Tibial artery (tissue), 4 donors: ENCODE measurements at regions of chr14 and their contacts with region 1.

Region 1: GRCh38 chr14:22386924-22387775 is 201.9 kb downstream of the DAD1 start:
- DNase-seq: peak in 1 of 2 donors; percentile 60
- H3K4me3 ChIP-seq: no peak overlapping the region
- H3K27ac ChIP-seq: peak overlapping the region in 1 of 2 donors; percentile 13
- H3K4me1 ChIP-seq: peaks cover 0 to 11% (median 5%) of the 10 kb centered on the region in 4 donors
- H3K27me3 ChIP-seq: peaks cover 0 to 6% of the 10 kb centered on the region in 2 donors
- CTCF ChIP-seq: peak; percentile 75 to 82

Region 2: GRCh38 chr14:22319526-22320361 is 67.4 kb before region 1 on chr14:
- intact Hi-C with region 1: loop called (anchors 5 kb)
- DNase-seq: peak; percentile 68 to 70
- H3K4me3 ChIP-seq: no peak overlapping the region
- H3K27ac ChIP-seq: no peak overlapping the region
- H3K4me1 ChIP-seq: no peaks in the 10 kb centered on the region
- H3K27me3 ChIP-seq: no peaks in the 10 kb centered on the region
- CTCF ChIP-seq: peak; percentile 64 to 67

Region 3: DNA sequence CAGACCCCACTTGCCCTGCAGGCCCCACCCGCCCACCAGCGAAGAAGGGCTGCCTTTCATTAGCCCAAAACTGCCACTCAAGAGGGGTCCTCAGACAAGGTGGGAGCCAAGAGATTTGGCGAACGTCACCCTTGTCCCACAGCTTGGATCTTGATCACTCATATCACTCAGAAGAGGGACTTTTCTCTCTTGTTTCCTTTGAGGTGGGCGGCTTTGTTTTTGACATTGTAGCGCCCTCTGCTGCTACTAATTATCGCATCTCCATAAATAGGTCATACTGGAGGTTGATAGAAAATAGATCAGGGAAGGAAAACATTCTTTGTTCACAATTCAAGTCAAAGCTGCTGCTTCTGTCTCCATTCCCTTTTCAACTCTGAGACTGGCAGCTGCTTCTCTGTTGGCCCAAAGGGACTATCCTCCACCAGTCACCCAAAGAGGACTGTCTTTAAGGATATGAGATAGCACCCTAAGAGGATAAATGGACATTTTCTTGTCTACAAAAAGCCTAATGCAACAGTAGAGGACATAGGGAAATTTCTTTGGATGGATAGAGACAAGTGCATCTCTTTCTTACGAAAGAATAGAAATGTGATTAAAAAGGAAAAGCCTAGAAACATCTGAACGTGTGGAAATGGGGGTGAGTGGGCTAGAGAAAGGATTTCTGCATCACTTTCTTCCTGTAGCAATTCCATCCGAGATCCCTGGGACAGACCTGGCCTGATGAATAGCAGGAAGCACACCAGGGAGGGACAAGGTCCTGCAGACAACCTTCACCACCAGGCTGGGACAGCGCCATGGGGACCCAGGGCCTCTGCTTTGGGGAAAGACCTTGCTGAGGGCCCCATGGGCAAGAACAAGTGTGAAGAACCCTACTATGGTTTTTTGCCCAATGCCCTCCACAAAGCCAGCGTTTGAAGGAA is 86.0 kb after region 1 on chr14:
- intact Hi-C with region 1: loop called (anchors 5 kb)
- DNase-seq: peak in 1 of 2 donors; percentile 53
- H3K4me3 ChIP-seq: no peak overlapping the region
- H3K27ac ChIP-seq: no peak overlapping the region
- H3K4me1 ChIP-seq: peaks cover 0 to 24% (median 13%) of the 10 kb centered on the region in 4 donors
- H3K27me3 ChIP-seq: no peaks in the 10 kb centered on the region
- CTCF ChIP-seq: peak; percentile 37 to 44